ENCODE measurements at regions of chr20 and their contacts with region 1.

Region 1: GRCh38 chr20:57391074-57391554 is at the start of gene RBM38:
- DNase-seq: peak; percentile 50 to 86 (median 74)
- ATAC-seq: peak; percentile 54
- H3K4me3 ChIP-seq: peak within 1 kb of the TSS; percentile 97 to 98
- H3K4me3 Mint-ChIP-seq: peak within 1 kb of the TSS; percentile 99
- H3K27ac ChIP-seq: peak within 1 kb of the TSS; percentile 90 to 97
- H3K27ac Mint-ChIP-seq: peak within 1 kb of the TSS; percentile 98
- H3K4me1 ChIP-seq: peaks cover 53% of the 10 kb centered on the region
- H3K4me1 Mint-ChIP-seq: peaks cover 45% of the 10 kb centered on the region
- H3K27me3 ChIP-seq: no peaks in the 10 kb centered on the region
- H3K27me3 Mint-ChIP-seq: no peaks in the 10 kb centered on the region
- CTCF ChIP-seq: no peak
- total RNA-seq, gene RBM38: 739 to 743 TPM

Region 2: GRCh38 chr20:56411759-56412472 is 979.2 kb before region 1 on chr20 and contains the start of gene CASS4:
- CTCF ChIA-PET with region 1: no interaction called
- POLR2A ChIA-PET with region 1: no interaction called
- intact Hi-C with region 1: loop called in 1 of 2 experiments (anchors 10 kb)
- DNase-seq: peak in 6 of 9 experiments; percentile 39 to 82 (median 61)
- ATAC-seq: peak; percentile 80
- H3K4me3 ChIP-seq: peak within 1 kb of the TSS; percentile 58 to 74
- H3K4me3 Mint-ChIP-seq: peak within 1 kb of the TSS; percentile 93
- H3K27ac ChIP-seq: peak within 1 kb of the TSS; percentile 71 to 80
- H3K27ac Mint-ChIP-seq: peak within 1 kb of the TSS; percentile 98
- H3K4me1 ChIP-seq: peaks cover 56% of the 10 kb centered on the region
- H3K4me1 Mint-ChIP-seq: peaks cover 50% of the 10 kb centered on the region
- H3K27me3 ChIP-seq: no peaks in the 10 kb centered on the region
- H3K27me3 Mint-ChIP-seq: no peaks in the 10 kb centered on the region
- CTCF ChIP-seq: no peak
- total RNA-seq, gene CASS4: 23.5 to 26.0 TPM

Region 3: DNA sequence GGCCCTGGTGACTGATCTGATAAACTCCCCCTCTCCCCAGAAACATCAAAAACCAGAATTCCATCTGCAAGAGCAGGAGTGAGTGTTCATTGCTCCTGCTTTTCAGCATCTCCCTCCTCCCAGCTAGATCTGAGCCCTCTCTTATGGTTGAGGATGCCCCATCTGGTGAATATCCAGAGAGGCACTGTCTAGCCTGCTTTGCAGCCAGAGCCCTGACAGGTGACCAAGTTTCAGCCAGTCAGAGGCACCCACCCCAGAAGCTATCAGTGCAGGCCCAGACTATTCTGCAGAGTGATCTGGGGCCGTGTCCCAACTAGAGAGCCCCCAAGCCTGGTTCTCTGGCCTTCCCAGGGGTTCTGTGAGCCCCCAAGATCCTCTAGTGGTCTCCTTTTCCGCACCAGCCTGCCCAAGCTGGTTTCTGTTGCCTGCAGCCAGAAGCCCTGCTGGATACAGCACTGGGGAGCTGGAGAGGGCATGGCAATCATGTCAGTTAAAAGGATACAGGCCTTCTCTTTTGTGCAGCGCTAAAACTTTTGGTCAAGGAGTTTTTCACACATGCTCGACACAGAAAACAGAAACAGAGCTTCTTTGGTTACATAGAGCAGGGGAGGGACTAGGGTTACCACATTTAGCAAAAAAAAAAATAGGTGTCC is 118.1 kb before region 1 on chr20:
- CTCF ChIA-PET with region 1: no interaction called
- POLR2A ChIA-PET with region 1: no interaction called
- intact Hi-C with region 1: no loop called
- DNase-seq: no peak
- ATAC-seq: no peak
- H3K4me3 ChIP-seq: no peak overlapping the region
- H3K4me3 Mint-ChIP-seq: no peak overlapping the region
- H3K27ac ChIP-seq: no peak overlapping the region
- H3K27ac Mint-ChIP-seq: no peak overlapping the region
- H3K4me1 ChIP-seq: no peaks in the 10 kb centered on the region
- H3K4me1 Mint-ChIP-seq: no peaks in the 10 kb centered on the region
- H3K27me3 ChIP-seq: peaks cover 0 to 5% of the 10 kb centered on the region in 2 experiments
- H3K27me3 Mint-ChIP-seq: peaks cover 36% of the 10 kb centered on the region
- CTCF ChIP-seq: no peak

Region 4: GRCh38 chr20:57622579-57623377 is 231.7 kb after region 1 on chr20:
- CTCF ChIA-PET with region 1: interaction called, 6 read pairs
- POLR2A ChIA-PET with region 1: interaction called, 7 read pairs
- intact Hi-C with region 1: loop called in 1 of 2 experiments (anchors 2 kb)
- DNase-seq: peak; percentile 52 to 80 (median 76)
- ATAC-seq: peak; percentile 34
- H3K4me3 ChIP-seq: no peak overlapping the region
- H3K4me3 Mint-ChIP-seq: peak overlapping the region; percentile 57
- H3K27ac ChIP-seq: no peak overlapping the region
- H3K27ac Mint-ChIP-seq: peak overlapping the region; percentile 84
- H3K4me1 ChIP-seq: peaks cover 73% of the 10 kb centered on the region
- H3K4me1 Mint-ChIP-seq: peaks cover 78% of the 10 kb centered on the region
- H3K27me3 ChIP-seq: no peaks in the 10 kb centered on the region
- H3K27me3 Mint-ChIP-seq: no peaks in the 10 kb centered on the region
- CTCF ChIP-seq: peak; percentile 72

Region 5: GRCh38 chr20:58228484-58229197 is 837.5 kb after region 1 on chr20 and contains the start of gene ANKRD60:
- CTCF ChIA-PET with region 1: no interaction called
- POLR2A ChIA-PET with region 1: no interaction called
- intact Hi-C with region 1: loop called in 1 of 2 experiments (anchors 10 kb)
- DNase-seq: peak in 7 of 9 experiments; percentile 8 to 86 (median 81)
- ATAC-seq: peak; percentile 95
- H3K4me3 ChIP-seq: peak within 1 kb of the TSS in 1 of 2 experiments; percentile 27
- H3K4me3 Mint-ChIP-seq: peak within 1 kb of the TSS; percentile 67
- H3K27ac ChIP-seq: no peak within 1 kb of the TSS
- H3K27ac Mint-ChIP-seq: peak within 1 kb of the TSS; percentile 74
- H3K4me1 ChIP-seq: peaks cover 7% of the 10 kb centered on the region
- H3K4me1 Mint-ChIP-seq: peaks cover 12% of the 10 kb centered on the region
- H3K27me3 ChIP-seq: peaks cover 18 to 19% of the 10 kb centered on the region in 2 experiments
- H3K27me3 Mint-ChIP-seq: peaks cover 58% of the 10 kb centered on the region
- CTCF ChIP-seq: no peak
- total RNA-seq, gene ANKRD60: not detected

Region 6: GRCh38 chr20:58239216-58239615 is 848.1 kb after region 1 on chr20:
- CTCF ChIA-PET with region 1: no interaction called
- POLR2A ChIA-PET with region 1: no interaction called
- intact Hi-C with region 1: no loop called
- DNase-seq: no peak
- ATAC-seq: no peak
- H3K4me3 ChIP-seq: no peak overlapping the region
- H3K4me3 Mint-ChIP-seq: no peak overlapping the region
- H3K27ac ChIP-seq: no peak overlapping the region
- H3K27ac Mint-ChIP-seq: no peak overlapping the region
- H3K4me1 ChIP-seq: peaks cover 7% of the 10 kb centered on the region
- H3K4me1 Mint-ChIP-seq: peaks cover 19% of the 10 kb centered on the region
- H3K27me3 ChIP-seq: no peaks in the 10 kb centered on the region
- H3K27me3 Mint-ChIP-seq: no peaks in the 10 kb centered on the region
- CTCF ChIP-seq: no peak

Region 7: GRCh38 chr20:58888521-58889333 is 1497.6 kb after region 1 on chr20:
- CTCF ChIA-PET with region 1: no interaction called
- POLR2A ChIA-PET with region 1: no interaction called
- intact Hi-C with region 1: loop called in 1 of 2 experiments (anchors 5 kb)
- DNase-seq: peak; percentile 69 to 92 (median 82)
- ATAC-seq: peak; percentile 49
- H3K4me3 ChIP-seq: peak overlapping the region; percentile 66 to 72
- H3K4me3 Mint-ChIP-seq: peak overlapping the region; percentile 83
- H3K27ac ChIP-seq: peak overlapping the region; percentile 79 to 95
- H3K27ac Mint-ChIP-seq: peak overlapping the region; percentile 92
- H3K4me1 ChIP-seq: peaks cover 14% of the 10 kb centered on the region
- H3K4me1 Mint-ChIP-seq: peaks cover 35% of the 10 kb centered on the region
- H3K27me3 ChIP-seq: no peaks in the 10 kb centered on the region
- H3K27me3 Mint-ChIP-seq: no peaks in the 10 kb centered on the region
- CTCF ChIP-seq: no peak

Region 8: GRCh38 chr20:59253779-59254319 is 1862.7 kb after region 1 on chr20:
- CTCF ChIA-PET with region 1: no interaction called
- POLR2A ChIA-PET with region 1: no interaction called
- intact Hi-C with region 1: loop called in 1 of 2 experiments (anchors 10 kb)
- DNase-seq: peak in 7 of 9 experiments; percentile 26 to 70 (median 40)
- ATAC-seq: peak; percentile 61
- H3K4me3 ChIP-seq: peak overlapping the region in 1 of 2 experiments; percentile 18
- H3K4me3 Mint-ChIP-seq: peak overlapping the region; percentile 75
- H3K27ac ChIP-seq: peak overlapping the region; percentile 57 to 59
- H3K27ac Mint-ChIP-seq: peak overlapping the region; percentile 98
- H3K4me1 ChIP-seq: peaks cover 53% of the 10 kb centered on the region
- H3K4me1 Mint-ChIP-seq: peaks cover 74% of the 10 kb centered on the region
- H3K27me3 ChIP-seq: no peaks in the 10 kb centered on the region
- H3K27me3 Mint-ChIP-seq: no peaks in the 10 kb centered on the region
- CTCF ChIP-seq: no peak